HAP-1 (cell line): ENCODE measurements at regions of chr19 and their contacts with region 1.

Region 1: DNA sequence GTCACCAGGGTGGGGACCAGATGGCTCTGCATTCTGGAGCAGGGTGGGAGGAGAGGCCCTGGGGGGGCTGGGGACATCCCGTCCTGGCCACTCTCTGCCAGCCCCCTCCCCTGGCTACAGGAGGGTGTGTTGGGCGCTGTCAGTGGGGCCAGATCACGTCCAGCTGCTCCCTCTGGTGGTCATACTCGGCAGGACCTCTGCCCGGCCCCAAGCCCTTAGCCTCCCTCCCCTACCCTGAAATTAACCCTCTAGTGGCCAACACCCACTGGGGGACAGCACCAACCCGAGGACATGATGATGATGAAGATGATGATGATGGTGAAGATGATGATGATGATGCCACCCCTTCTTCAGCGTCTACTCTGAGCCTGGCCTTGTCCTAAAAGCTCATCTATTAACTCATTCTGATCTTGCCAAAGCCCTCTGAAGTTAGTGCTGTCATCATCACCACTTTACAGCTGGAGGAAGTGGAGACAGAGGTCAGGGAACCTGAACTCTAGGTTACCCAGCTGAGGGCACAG is 590 bp upstream of the LGI4 start:
- DNase-seq: peak; percentile 76 to 90
- H3K4me3 ChIP-seq: no peak overlapping the region
- H3K4me1 ChIP-seq: no peaks in the 10 kb centered on the region
- H3K27me3 ChIP-seq: no peaks in the 10 kb centered on the region; the same call in 1 of the 2 replicates

Region 2: GRCh38 chr19:35063940-35064818 is 71.3 kb before region 1 on chr19:
- in situ Hi-C with region 1: loop called (anchors 5 kb)
- DNase-seq: no peak
- H3K4me3 ChIP-seq: no peak overlapping the region
- H3K4me1 ChIP-seq: peaks cover 12% of the 10 kb centered on the region
- H3K27me3 ChIP-seq: no peaks in the 10 kb centered on the region

Region 3: DNA sequence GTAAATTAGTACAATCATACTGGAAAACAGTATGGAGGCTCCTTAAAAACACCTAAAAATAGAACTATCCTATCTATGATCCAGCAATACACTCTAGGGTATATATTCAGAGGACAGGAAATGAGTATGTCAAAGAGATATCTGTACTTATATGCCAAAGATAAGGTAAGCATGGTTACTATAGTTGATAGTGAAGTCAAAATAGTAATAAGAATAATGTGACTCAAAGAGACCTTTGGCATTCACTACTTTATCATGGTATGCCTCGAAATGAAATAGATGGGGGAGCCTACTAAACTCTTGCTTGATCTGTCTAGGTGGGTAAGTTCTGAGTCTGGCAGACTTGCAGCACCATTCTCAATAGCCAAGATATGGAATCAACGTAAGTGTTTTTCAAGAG is 49.4 kb after region 1 on chr19:
- in situ Hi-C with region 1: no loop called
- DNase-seq: no peak
- H3K4me3 ChIP-seq: no peak overlapping the region
- H3K4me1 ChIP-seq: no peaks in the 10 kb centered on the region
- H3K27me3 ChIP-seq: peaks cover 8% of the 10 kb centered on the region